Caco-2 (cell line): ENCODE measurements at regions of chr6 and their contacts with region 1.

Region 1: GRCh38 chr6:158644231-158645063 is at the start of gene DYNLT1:
- DNase-seq: peak; percentile 92 to 97
- H3K4me3 ChIP-seq: peak within 1 kb of the TSS; percentile 88
- H3K4me3 Mint-ChIP-seq: peak within 1 kb of the TSS; percentile 96
- H3K27ac Mint-ChIP-seq: peak within 1 kb of the TSS; percentile 94
- H3K4me1 ChIP-seq: peaks cover 19% of the 10 kb centered on the region
- H3K4me1 Mint-ChIP-seq: peaks cover 28% of the 10 kb centered on the region
- H3K27me3 ChIP-seq: no peaks in the 10 kb centered on the region
- H3K27me3 Mint-ChIP-seq: no peaks in the 10 kb centered on the region
- CTCF ChIP-seq: peak in 1 of 2 experiments; percentile 0
- total RNA-seq, gene DYNLT1: 95.6 and 96.6 TPM in 2 replicates

Region 2: DNA sequence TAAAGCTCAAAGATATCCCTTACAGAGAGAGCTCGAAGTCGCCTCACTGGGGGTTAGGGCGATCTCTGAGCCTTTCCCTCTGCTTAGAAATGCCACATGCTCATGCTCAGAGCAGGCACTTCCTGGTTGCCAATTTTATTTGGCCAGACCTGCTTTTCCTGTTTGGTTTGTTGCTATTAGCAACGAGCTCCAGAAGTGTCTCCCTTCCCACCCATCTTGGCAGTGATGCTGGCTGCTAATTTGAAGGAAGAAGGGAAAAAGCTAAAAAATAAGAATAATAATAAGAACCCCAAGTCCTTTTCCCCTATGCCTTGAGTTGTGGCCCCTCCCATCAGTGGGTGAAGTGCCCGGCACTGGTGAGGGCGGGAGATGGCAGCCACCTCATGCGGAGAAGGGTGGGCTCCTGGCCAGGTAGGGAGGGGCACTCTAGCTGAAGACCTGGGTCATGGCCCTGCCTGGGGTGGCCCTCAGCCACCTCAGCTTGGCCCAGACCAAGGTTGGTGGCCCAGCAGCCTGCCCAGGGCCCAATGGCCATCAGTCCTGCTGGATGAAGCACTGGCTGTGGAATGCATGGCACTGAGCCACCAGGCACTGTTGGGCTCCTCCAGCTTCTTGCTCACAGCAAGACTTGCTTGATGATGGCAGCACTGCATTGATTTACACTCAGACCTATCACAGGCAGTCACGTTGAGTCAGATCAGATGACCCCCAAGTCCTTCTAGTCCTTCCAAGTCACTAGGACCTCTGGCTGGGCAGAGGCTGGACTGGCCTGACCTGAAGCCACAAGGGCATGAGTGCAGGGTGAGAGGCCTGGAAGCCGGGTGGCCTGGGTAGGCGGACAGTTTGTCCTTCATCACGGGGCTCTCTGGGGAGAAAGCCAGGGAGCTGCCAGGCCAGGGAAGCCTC is 583.7 kb before region 1 on chr6:
- CTCF ChIA-PET with region 1: no interaction called
- POLR2A ChIA-PET with region 1: no interaction called
- intact Hi-C with region 1: no loop called
- DNase-seq: peak; percentile 61 to 73
- H3K4me3 ChIP-seq: no peak overlapping the region
- H3K4me3 Mint-ChIP-seq: no peak overlapping the region
- H3K27ac Mint-ChIP-seq: peak overlapping the region; percentile 93
- H3K4me1 ChIP-seq: peaks cover 12% of the 10 kb centered on the region
- H3K4me1 Mint-ChIP-seq: no peaks in the 10 kb centered on the region
- H3K27me3 ChIP-seq: no peaks in the 10 kb centered on the region
- H3K27me3 Mint-ChIP-seq: no peaks in the 10 kb centered on the region
- CTCF ChIP-seq: no peak

Region 3: DNA sequence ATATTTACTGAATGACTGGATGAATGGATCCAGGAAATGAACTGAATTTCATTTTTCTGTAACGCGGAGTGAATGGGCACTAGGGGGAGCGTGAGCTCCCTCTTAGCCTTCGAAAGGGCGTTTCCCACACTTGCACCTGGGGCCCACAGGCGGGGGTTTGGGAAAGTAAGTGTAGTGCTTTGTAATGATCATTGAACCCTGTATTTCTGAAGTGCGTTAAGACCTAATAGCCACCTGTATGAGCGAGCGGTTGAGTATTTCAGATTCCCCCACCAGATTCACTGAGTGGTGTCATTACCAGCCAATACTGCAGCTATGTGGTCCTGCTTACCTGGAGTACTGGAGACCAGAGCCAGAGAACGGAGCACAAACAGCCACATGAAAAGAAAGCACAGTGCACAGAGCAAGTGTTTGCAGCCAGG is 15.9 kb after region 1 on chr6:
- CTCF ChIA-PET with region 1: interaction called, 11 read pairs
- POLR2A ChIA-PET with region 1: interaction called, 3 read pairs
- intact Hi-C with region 1: no loop called
- DNase-seq: peak in 1 of 2 experiments; percentile 50
- H3K4me3 ChIP-seq: no peak overlapping the region
- H3K4me3 Mint-ChIP-seq: no peak overlapping the region
- H3K27ac Mint-ChIP-seq: no peak overlapping the region
- H3K4me1 ChIP-seq: 0 out of 2 replicates have a peak, but pooled peaks cover 3% of the 10 kb centered on the region
- H3K4me1 Mint-ChIP-seq: peaks cover 7% of the 10 kb centered on the region
- H3K27me3 ChIP-seq: no peaks in the 10 kb centered on the region
- H3K27me3 Mint-ChIP-seq: no peaks in the 10 kb centered on the region
- CTCF ChIP-seq: peak; percentile 58 to 62

Region 4: GRCh38 chr6:159701411-159701999 is 1057.1 kb after region 1 on chr6:
- CTCF ChIA-PET with region 1: no interaction called
- POLR2A ChIA-PET with region 1: no interaction called
- intact Hi-C with region 1: no loop called
- DNase-seq: no peak
- H3K4me3 ChIP-seq: no peak overlapping the region
- H3K4me3 Mint-ChIP-seq: no peak overlapping the region
- H3K27ac Mint-ChIP-seq: no peak overlapping the region
- H3K4me1 ChIP-seq: no peaks in the 10 kb centered on the region
- H3K4me1 Mint-ChIP-seq: no peaks in the 10 kb centered on the region
- H3K27me3 ChIP-seq: no peaks in the 10 kb centered on the region
- H3K27me3 Mint-ChIP-seq: no peaks in the 10 kb centered on the region
- CTCF ChIP-seq: no peak